WTC11 (cell line): ENCODE measurements at regions of chr11 and their contacts with region 1.

Region 1: GRCh38 chr11:126989942-126990715 is 10.4 kb downstream of the KIRREL3 start:
- DNase-seq: peak; percentile 94
- ATAC-seq: peak; percentile 99
- H3K4me3 Mint-ChIP-seq: peak overlapping the region; percentile 8; the same call in 1 of the 2 replicates
- H3K27ac Mint-ChIP-seq: no peak overlapping the region
- H3K4me1 Mint-ChIP-seq: peaks cover 9% of the 10 kb centered on the region; the same call in 1 of the 2 replicates
- H3K27me3 Mint-ChIP-seq: no peaks in the 10 kb centered on the region; the same call in none of the 2 replicates
- CTCF ChIP-seq: peak; percentile 92

Region 2: GRCh38 chr11:126440792-126441514 is 549.2 kb before region 1 on chr11:
- CTCF ChIA-PET with region 1: interaction called, 21 read pairs
- POLR2A ChIA-PET with region 1: no interaction called
- DNase-seq: peak; percentile 95
- ATAC-seq: peak; percentile 85
- H3K4me3 Mint-ChIP-seq: peak overlapping the region; percentile 42
- H3K27ac Mint-ChIP-seq: no peak overlapping the region
- H3K4me1 Mint-ChIP-seq: peaks cover 31% of the 10 kb centered on the region
- H3K27me3 Mint-ChIP-seq: no peaks in the 10 kb centered on the region; the same call in 1 of the 2 replicates
- CTCF ChIP-seq: peak; percentile 95

Region 3: GRCh38 chr11:126601550-126602215 is 388.4 kb before region 1 on chr11:
- CTCF ChIA-PET with region 1: interaction called, 29 read pairs
- POLR2A ChIA-PET with region 1: no interaction called
- DNase-seq: no peak
- ATAC-seq: peak; percentile 45
- H3K4me3 Mint-ChIP-seq: 0 out of 2 replicates have a peak overlapping the region, but pooled peaks have one; percentile 9
- H3K27ac Mint-ChIP-seq: peak overlapping the region; percentile 17; the same call in 1 of the 2 replicates
- H3K4me1 Mint-ChIP-seq: peaks cover 34% of the 10 kb centered on the region
- H3K27me3 Mint-ChIP-seq: no peaks in the 10 kb centered on the region
- CTCF ChIP-seq: no peak

Region 4: DNA sequence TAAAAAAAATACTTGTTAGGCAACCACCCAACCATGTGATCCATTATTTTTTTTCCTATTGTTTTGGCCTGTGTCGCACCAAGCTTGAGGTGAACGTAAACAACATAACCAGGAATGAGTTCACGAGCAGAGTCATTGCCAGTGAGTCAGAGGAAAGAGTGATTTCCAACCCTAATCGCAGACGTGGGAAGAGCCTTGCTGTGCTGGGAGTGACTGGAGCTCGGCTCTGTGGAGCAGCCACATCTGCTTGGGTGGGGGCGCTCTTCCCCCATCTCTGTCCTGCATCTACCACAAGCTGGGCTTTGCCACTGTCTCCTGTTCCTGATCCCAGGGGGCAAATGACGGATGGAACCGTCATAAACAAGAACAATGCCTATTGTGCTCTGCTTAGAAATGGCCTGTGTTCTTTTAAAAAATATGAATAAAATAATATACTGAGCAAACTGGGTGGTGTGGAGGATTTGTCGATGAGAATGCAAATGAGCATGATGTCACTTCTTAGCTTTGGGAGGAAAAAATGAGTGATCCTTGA is 199.5 kb before region 1 on chr11:
- CTCF ChIA-PET with region 1: interaction called, 30 read pairs
- POLR2A ChIA-PET with region 1: no interaction called
- DNase-seq: peak; percentile 34
- ATAC-seq: peak; percentile 92
- H3K4me3 Mint-ChIP-seq: no peak overlapping the region
- H3K27ac Mint-ChIP-seq: no peak overlapping the region
- H3K4me1 Mint-ChIP-seq: peaks cover 27% of the 10 kb centered on the region
- H3K27me3 Mint-ChIP-seq: no peaks in the 10 kb centered on the region
- CTCF ChIP-seq: no peak

Region 5: GRCh38 chr11:126878913-126879482 is 111.1 kb before region 1 on chr11:
- CTCF ChIA-PET with region 1: interaction called, 15 read pairs
- POLR2A ChIA-PET with region 1: no interaction called
- DNase-seq: no peak
- ATAC-seq: no peak
- H3K4me3 Mint-ChIP-seq: no peak overlapping the region
- H3K27ac Mint-ChIP-seq: no peak overlapping the region
- H3K4me1 Mint-ChIP-seq: no peaks in the 10 kb centered on the region
- H3K27me3 Mint-ChIP-seq: no peaks in the 10 kb centered on the region
- CTCF ChIP-seq: no peak

Region 6: GRCh38 chr11:126969865-126970479 is 20.2 kb before region 1 on chr11:
- CTCF ChIA-PET with region 1: interaction called, 79 read pairs
- POLR2A ChIA-PET with region 1: interaction called, 3 read pairs
- DNase-seq: peak; percentile 33
- ATAC-seq: peak; percentile 83
- H3K4me3 Mint-ChIP-seq: no peak overlapping the region
- H3K27ac Mint-ChIP-seq: no peak overlapping the region
- H3K4me1 Mint-ChIP-seq: peaks cover 28% of the 10 kb centered on the region
- H3K27me3 Mint-ChIP-seq: no peaks in the 10 kb centered on the region; the same call in 1 of the 2 replicates
- CTCF ChIP-seq: 0 out of 2 replicates have a peak, but pooled peaks have one; percentile 36

Region 7: GRCh38 chr11:127017482-127017881 is 27.4 kb after region 1 on chr11:
- CTCF ChIA-PET with region 1: interaction called, 11 read pairs
- POLR2A ChIA-PET with region 1: no interaction called
- DNase-seq: peak; percentile 41
- ATAC-seq: peak; percentile 96
- H3K4me3 Mint-ChIP-seq: no peak overlapping the region
- H3K27ac Mint-ChIP-seq: no peak overlapping the region
- H3K4me1 Mint-ChIP-seq: peaks cover 15% of the 10 kb centered on the region
- H3K27me3 Mint-ChIP-seq: no peaks in the 10 kb centered on the region; the same call in 1 of the 2 replicates
- CTCF ChIP-seq: no peak; the same call in 1 of the 2 replicates